Head of caudate nucleus (tissue), 42 donors: ENCODE measurements at regions of chr9 and their contacts with region 1.

Region 1: DNA sequence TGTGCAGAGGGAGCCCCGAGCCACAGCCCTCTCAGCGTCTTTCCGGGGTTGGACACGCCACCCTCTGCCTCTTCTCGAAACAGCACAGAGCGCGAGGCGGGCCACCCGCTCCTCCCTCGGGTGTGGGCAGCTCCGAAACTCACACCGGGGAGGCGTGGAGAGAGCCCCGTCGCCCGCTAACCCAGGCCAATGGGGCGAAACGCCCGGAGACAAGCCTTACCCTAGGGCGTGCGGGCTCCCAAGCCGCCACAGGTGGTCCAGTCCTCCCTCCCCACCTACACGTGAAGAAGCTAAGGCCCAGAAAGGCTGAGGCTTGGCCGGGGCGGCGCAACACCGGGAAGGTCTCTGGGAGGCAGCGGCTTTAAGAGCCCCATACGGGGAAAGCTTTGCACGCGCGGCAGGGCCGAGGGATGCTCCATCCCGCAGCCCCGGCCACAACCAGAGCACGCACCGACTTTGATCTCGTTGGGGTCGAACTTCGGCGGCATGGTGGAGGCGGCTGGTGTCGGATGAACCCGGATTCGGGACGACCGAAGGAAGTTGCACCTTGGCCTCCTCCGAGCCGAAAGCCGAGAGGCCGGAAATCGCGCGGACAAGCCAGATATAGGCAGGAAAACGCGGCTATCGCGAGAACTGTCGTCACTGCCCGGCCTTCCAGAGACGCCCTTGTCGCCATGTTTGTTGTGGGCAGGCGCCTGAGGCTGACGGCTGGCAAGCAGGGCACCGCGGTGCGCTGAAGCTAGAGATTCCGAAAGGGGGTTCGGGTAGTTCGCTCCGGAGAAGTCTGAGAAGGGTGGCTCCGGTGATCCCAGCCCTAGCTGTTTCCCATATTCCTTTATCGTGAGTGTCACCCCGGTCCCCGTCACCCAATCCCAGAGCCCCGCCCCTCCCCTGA is at the starts of genes LRSAM1 and RPL12:
- DNase-seq: peak; percentile 94 to 99 (median 97)

Region 2: DNA sequence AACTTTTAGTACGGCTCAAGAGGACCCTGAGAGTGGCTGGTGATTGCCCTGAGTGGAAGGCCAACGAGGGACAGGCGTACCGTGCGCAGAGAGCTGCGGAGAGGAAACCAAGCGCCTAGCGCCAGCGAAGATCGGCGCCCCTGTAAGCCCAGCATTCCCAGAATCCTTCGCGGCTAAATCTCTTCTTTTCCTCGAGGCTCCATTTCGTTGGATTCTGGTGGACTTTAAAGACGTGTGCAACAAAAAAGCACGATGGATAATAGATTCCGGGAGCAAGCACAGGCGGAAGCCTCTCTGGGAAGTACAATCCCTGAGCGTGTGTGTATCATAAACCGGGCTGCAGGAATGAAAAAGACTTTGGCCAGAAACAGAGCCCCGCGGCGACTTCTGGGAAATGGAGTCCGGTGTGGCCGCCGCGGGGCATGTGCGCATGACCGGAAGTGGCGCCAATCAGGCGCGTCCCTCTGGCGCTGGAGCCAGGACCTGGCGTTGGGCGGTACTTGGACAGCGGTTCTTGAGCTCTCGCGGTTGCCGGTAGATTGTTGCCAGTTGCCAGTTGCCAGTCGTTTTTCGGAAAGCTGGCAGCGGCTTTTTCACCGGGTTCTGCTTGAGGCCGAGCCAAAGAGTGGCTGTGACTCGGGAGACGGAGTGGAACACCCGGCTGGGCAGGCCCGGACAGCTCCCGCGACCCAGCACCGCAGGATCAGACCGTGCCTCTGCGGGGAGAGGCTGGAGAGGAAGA is 27.0 kb before region 1 on chr9 and contains the start of gene ZNF79:
- intact Hi-C with region 1: loop called (anchors 2 kb)
- DNase-seq: peak; percentile 83 to 97 (median 93)